ENCODE measurements at regions of chr5 and their contacts with region 1.

Region 1: GRCh38 chr5:147857302-147858129 is 21.0 kb upstream of the SCGB3A2 start:
- DNase-seq: no peak
- ATAC-seq: peak in 1 of 4 donors; percentile 52
- H3K4me3 ChIP-seq: no peak overlapping the region
- H3K27ac ChIP-seq: no peak overlapping the region
- H3K4me1 ChIP-seq: no peaks in the 10 kb centered on the region
- H3K27me3 ChIP-seq: no peaks in the 10 kb centered on the region
- CTCF ChIP-seq: peak; percentile 63

Region 2: GRCh38 chr5:147310059-147310704 is 547.3 kb before region 1 on chr5:
- intact Hi-C with region 1: no loop called
- DNase-seq: peak; percentile 62 to 65
- ATAC-seq: peak; percentile 80 to 93 (median 84)
- H3K4me3 ChIP-seq: no peak overlapping the region
- H3K27ac ChIP-seq: no peak overlapping the region
- H3K4me1 ChIP-seq: no peaks in the 10 kb centered on the region
- H3K27me3 ChIP-seq: no peaks in the 10 kb centered on the region
- CTCF ChIP-seq: no peak

Region 3: DNA sequence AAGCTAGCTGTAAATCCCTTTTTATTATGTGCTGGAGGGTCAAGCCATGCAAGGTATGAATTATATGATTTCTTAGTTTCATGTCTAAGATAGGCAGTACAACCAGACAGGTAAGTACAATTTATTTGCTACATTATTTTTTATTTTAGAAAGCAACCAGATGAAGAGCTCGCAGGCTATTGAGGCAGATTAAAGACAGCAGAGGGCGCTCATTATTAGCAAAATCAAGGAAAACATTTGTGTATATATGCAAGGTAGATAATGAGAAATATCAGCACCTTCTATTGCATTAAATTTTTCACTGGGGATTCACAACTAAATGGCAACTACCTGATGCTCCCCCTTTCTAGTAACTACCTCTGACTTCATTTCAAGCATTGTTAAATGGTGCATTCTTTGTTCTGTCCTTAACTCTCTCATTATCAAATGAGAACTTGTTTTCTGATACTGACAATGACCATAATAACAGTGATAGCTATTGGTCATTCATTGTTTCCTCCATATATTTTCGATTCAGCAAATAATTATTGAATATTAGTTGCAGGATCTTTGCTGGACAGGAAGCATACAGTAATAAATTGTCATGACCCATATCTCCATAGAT is 29.6 kb after region 1 on chr5:
- intact Hi-C with region 1: no loop called
- DNase-seq: no peak
- ATAC-seq: no peak
- H3K4me3 ChIP-seq: no peak overlapping the region
- H3K27ac ChIP-seq: no peak overlapping the region
- H3K4me1 ChIP-seq: no peaks in the 10 kb centered on the region
- H3K27me3 ChIP-seq: no peaks in the 10 kb centered on the region
- CTCF ChIP-seq: peak; percentile 30

Region 4: GRCh38 chr5:147935032-147935431 is 77.5 kb after region 1 on chr5:
- intact Hi-C with region 1: loop called in 1 of 2 experiments (anchors 10 kb)
- DNase-seq: no peak
- ATAC-seq: peak in 1 of 4 donors; percentile 71
- H3K4me3 ChIP-seq: no peak overlapping the region
- H3K27ac ChIP-seq: no peak overlapping the region
- H3K4me1 ChIP-seq: no peaks in the 10 kb centered on the region
- H3K27me3 ChIP-seq: no peaks in the 10 kb centered on the region
- CTCF ChIP-seq: no peak